ENCODE measurements at regions of chr18 and their contacts with region 1.

Region 1: DNA sequence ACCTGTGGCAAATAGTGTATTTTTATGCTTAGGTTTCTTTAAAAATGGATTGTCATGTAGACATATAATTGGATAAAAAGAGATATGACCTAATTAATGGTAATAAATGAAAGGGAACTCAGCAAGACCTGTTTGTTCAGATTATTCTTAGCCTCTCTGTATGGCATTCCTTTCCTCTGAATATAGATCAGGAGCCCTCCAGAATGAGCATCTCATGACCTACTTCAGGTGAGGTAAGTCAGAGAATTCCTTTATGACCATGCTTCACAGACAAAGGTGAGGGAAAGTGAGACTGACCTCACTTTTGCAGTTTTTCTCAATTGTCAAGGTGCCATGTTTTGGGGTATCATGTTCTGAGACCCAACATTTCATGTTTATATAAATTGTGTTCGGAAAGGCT is 1744.3 kb upstream of the PIK3C3 start:
- DNase-seq: no peak
- H3K4me3 ChIP-seq: no peak overlapping the region
- H3K27ac ChIP-seq: no peak overlapping the region
- H3K4me1 ChIP-seq: no peaks in the 10 kb centered on the region
- H3K27me3 ChIP-seq: no peaks in the 10 kb centered on the region
- CTCF ChIP-seq: no peak

Region 2: GRCh38 chr18:39134255-39134654 is 1076.4 kb before region 1 on chr18:
- intact Hi-C with region 1: loop called (anchors 5 kb)
- DNase-seq: no peak
- H3K4me3 ChIP-seq: no peak overlapping the region
- H3K27ac ChIP-seq: no peak overlapping the region
- H3K4me1 ChIP-seq: no peaks in the 10 kb centered on the region
- H3K27me3 ChIP-seq: no peaks in the 10 kb centered on the region
- CTCF ChIP-seq: no peak

Region 3: GRCh38 chr18:39871961-39872360 is 338.7 kb before region 1 on chr18:
- intact Hi-C with region 1: no loop called
- DNase-seq: no peak
- H3K4me3 ChIP-seq: no peak overlapping the region
- H3K27ac ChIP-seq: no peak overlapping the region
- H3K4me1 ChIP-seq: no peaks in the 10 kb centered on the region
- H3K27me3 ChIP-seq: no peaks in the 10 kb centered on the region
- CTCF ChIP-seq: no peak